Naive thymus-derived CD4-positive, alpha-beta T cell (primary cell): ENCODE measurements at regions of chr2 and their contacts with region 1.

Region 1: GRCh38 chr2:169479257-169480078 is at the start of gene BBS5:
- DNase-seq: peak; percentile 55 to 78 (median 74)
- ATAC-seq: peak; percentile 93
- H3K4me3 ChIP-seq: peak within 1 kb of the TSS; percentile 87
- H3K4me3 Mint-ChIP-seq: peak within 1 kb of the TSS; percentile 89 to 96 (median 92)
- H3K27ac ChIP-seq: peak within 1 kb of the TSS; percentile 49
- H3K27ac Mint-ChIP-seq: peak within 1 kb of the TSS; percentile 37 to 86 (median 69)
- H3K4me1 ChIP-seq: peaks cover 0 to 3% of the 10 kb centered on the region in 2 donors
- H3K4me1 Mint-ChIP-seq: peaks cover 12 to 30% (median 22%) of the 10 kb centered on the region in 7 donors
- H3K27me3 ChIP-seq: no peaks in the 10 kb centered on the region
- H3K27me3 Mint-ChIP-seq: no peaks in the 10 kb centered on the region
- total RNA-seq, gene BBS5: 2.0 to 3.8 (median 2.6) TPM

Region 2: DNA sequence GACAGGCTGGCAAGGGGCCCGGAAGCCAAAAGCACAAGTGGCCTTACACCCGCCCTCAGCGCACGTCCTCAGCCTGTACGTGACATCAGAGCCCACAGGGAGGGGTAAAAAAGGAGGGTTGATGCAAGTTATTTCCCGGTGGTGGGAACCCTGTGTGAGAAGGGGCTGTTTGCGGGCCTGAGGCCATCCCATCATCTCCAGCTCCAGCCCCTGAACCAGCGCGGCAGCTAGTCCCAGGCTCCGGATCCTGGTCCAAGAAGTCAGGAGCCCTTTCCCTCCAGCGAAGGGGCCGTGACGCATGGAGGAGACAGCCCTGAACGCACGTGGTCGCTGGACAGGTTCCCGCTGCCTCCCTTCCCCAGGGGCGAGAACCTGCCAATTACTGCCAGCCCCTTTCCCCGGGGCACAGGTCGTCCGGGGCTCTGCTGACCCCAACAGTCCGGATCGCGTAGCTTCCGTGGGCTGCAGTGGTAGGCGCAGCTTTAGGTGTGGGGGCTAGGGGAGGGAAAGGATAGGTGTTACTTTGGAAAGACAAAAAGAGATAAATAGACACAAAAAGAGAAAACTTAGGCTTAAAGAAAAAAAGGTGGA is 115.8 kb before region 1 on chr2:
- CTCF ChIA-PET with region 1: no interaction called
- POLR2A ChIA-PET with region 1: no interaction called
- intact Hi-C with region 1: loop called in 1 of 2 experiments (anchors 5 kb)
- DNase-seq: peak in 8 of 9 donors; percentile 14 to 49 (median 38)
- ATAC-seq: peak; percentile 58
- H3K4me3 ChIP-seq: peak overlapping the region; percentile 89
- H3K4me3 Mint-ChIP-seq: peak overlapping the region; percentile 87 to 98 (median 94)
- H3K27ac ChIP-seq: no peak overlapping the region
- H3K27ac Mint-ChIP-seq: peak overlapping the region in 4 of 9 donors; percentile 14 to 88 (median 55)
- H3K4me1 ChIP-seq: peaks cover 11 to 18% of the 10 kb centered on the region in 2 donors
- H3K4me1 Mint-ChIP-seq: peaks cover 17 to 37% (median 29%) of the 10 kb centered on the region in 7 donors
- H3K27me3 ChIP-seq: peaks cover 4 to 15% of the 10 kb centered on the region in 2 donors
- H3K27me3 Mint-ChIP-seq: peaks cover 42 to 60% (median 49%) of the 10 kb centered on the region in 5 donors

Region 3: DNA sequence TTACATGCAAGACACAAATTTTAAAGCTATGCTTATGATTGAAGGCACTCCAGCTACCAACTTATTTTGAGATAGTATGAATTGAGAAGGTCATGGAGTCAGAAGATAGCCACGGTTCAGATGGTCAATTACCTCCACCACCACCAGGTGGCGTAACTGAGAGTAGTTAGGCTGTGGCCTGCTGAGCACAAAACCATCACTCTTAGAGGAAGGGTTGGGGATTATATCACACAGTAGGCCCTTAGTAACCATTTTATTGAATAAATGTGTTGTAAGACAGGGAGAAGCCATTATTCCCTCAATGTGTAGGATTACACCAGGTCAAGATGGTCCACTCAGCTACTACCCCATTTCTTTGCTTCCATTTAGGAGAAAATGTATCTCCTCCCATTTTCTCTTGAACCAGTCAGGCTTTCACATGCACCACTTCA is 48.8 kb after region 1 on chr2:
- CTCF ChIA-PET with region 1: interaction called, 3 read pairs
- POLR2A ChIA-PET with region 1: no interaction called
- intact Hi-C with region 1: loop called in 1 of 2 experiments (anchors 5 kb)
- DNase-seq: peak; percentile 31 to 71 (median 54)
- ATAC-seq: peak; percentile 92
- H3K4me3 ChIP-seq: no peak overlapping the region
- H3K4me3 Mint-ChIP-seq: no peak overlapping the region
- H3K27ac ChIP-seq: no peak overlapping the region
- H3K27ac Mint-ChIP-seq: peak overlapping the region in 4 of 9 donors; percentile 0 to 68 (median 20)
- H3K4me1 ChIP-seq: no peaks in the 10 kb centered on the region
- H3K4me1 Mint-ChIP-seq: peaks cover 0 to 8% (median 0%) of the 10 kb centered on the region in 7 donors
- H3K27me3 ChIP-seq: no peaks in the 10 kb centered on the region
- H3K27me3 Mint-ChIP-seq: no peaks in the 10 kb centered on the region

Region 4: DNA sequence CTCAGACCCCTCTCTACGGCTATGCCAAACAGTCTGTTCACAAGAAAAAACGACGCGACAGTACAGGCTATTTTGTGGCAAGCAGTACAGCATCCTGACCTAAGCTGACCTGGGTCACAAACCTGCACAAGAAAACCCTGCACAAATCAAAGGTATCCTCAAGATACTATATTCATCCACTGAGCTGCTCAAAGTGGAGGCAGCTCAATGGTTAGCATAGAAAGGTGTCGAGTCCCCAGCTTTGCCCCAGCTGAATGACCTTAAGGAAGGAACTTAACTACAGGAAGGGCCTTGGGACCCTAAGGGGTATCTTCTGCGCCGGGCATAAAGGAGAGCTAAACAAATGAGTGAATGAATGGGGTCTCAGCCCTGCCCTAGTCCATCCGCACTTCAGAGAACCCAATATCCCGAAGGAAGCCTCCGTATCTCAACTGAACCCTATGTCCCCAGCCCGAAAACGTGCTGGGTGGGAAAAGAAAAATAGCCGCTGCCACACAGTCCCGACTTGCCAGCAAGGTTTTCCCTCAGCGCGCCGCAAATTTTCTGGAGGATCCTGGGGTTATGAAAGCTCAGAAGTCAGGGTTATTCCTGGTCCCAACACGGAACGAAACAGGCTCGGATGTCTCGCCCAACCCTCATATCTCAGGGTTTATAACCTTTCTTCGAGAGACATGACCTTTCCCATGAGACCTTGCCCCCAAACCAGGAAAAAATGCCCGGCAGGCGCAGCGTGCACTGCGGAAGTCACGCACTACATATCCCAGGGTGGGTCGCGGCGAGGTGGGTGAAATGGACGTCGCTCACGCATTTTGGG is 93.9 kb after region 1 on chr2 and contains the start of gene FASTKD1:
- CTCF ChIA-PET with region 1: no interaction called
- POLR2A ChIA-PET with region 1: interaction called, 3 read pairs
- intact Hi-C with region 1: loop called (anchors 1 kb)
- DNase-seq: peak; percentile 55 to 88 (median 76)
- ATAC-seq: peak; percentile 100
- H3K4me3 ChIP-seq: peak within 1 kb of the TSS; percentile 93
- H3K4me3 Mint-ChIP-seq: peak within 1 kb of the TSS; percentile 88 to 99 (median 94)
- H3K27ac ChIP-seq: peak within 1 kb of the TSS; percentile 80
- H3K27ac Mint-ChIP-seq: peak within 1 kb of the TSS; percentile 74 to 95 (median 91)
- H3K4me1 ChIP-seq: peaks cover 4 to 5% of the 10 kb centered on the region in 2 donors
- H3K4me1 Mint-ChIP-seq: peaks cover 14 to 32% (median 24%) of the 10 kb centered on the region in 7 donors
- H3K27me3 ChIP-seq: no peaks in the 10 kb centered on the region
- H3K27me3 Mint-ChIP-seq: peaks cover 0 to 4% (median 0%) of the 10 kb centered on the region in 5 donors
- total RNA-seq, gene FASTKD1: 13.5 to 43.5 (median 31.0) TPM

Region 5: DNA sequence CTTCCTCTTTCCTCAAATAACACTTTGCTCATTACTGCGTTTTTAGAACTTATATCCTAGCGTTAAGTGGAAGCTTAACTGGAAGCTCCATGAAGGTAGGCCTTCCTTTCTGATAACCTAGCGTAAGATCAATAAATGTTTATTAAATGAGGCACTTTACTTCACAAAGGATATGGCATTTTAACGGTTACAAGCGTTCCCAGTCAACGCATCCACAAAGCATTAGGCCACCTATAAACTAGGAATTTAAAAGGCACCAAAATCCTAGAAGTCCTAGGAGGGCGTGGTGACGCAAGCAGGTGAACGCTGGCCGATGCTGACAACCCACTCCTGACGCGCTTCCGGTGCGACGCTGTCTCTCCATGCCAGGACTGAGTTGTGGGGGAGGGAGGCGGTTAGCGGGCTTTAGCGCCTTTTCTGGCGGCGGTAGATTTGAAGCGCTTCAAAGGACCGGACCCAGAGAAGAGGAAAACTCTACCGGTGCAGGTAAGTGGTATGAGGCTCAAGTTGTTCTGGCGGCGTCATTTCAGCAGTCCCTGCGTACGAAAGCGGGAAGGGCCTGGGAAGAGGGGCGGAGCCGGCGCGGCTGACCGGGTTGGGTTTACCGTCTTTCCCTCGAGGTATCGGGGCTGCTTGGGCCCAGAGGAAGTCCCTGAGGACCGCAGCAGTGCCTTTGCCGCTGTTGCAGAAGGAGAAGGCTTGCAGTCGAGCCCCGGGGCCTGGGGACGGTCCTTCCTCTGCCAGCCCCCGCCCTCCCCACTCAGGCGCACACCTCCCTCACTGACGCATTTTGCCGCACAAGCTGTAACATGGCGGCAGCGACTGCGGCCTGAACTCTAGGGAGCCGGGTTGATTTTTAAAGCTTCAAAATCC is 104.8 kb after region 1 on chr2 and contains the start of gene PPIG:
- CTCF ChIA-PET with region 1: no interaction called
- POLR2A ChIA-PET with region 1: no interaction called
- intact Hi-C with region 1: loop called in 1 of 2 experiments (anchors 1 kb)
- DNase-seq: peak; percentile 71 to 90 (median 85)
- ATAC-seq: peak; percentile 94
- H3K4me3 ChIP-seq: peak within 1 kb of the TSS; percentile 89
- H3K4me3 Mint-ChIP-seq: peak within 1 kb of the TSS; percentile 90 to 100 (median 99)
- H3K27ac ChIP-seq: peak within 1 kb of the TSS; percentile 99
- H3K27ac Mint-ChIP-seq: peak within 1 kb of the TSS; percentile 97 to 100 (median 100)
- H3K4me1 ChIP-seq: peaks cover 17 to 29% of the 10 kb centered on the region in 2 donors
- H3K4me1 Mint-ChIP-seq: peaks cover 12 to 46% (median 40%) of the 10 kb centered on the region in 7 donors
- H3K27me3 ChIP-seq: no peaks in the 10 kb centered on the region
- H3K27me3 Mint-ChIP-seq: peaks cover 0 to 4% (median 0%) of the 10 kb centered on the region in 5 donors
- total RNA-seq, gene PPIG: 50.6 to 86.1 (median 73.7) TPM

Region 6: DNA sequence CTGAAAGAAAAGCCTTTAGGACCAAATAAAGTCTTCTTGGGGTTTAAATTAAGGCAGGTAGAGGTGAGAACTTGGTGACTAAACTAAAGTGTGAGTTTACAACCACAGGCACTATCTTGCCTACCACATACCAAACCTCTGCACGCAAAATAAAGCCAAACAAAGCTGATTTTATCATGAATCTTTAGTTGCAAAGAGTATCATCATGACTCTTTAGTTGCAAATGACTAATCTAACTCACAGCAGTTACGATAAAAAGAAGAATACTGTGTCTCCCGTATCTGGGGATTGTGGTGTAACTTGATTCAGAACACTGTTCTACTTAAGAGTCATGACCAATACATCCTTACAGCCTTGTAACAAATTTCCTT is 203.6 kb after region 1 on chr2:
- CTCF ChIA-PET with region 1: no interaction called
- POLR2A ChIA-PET with region 1: no interaction called
- intact Hi-C with region 1: loop called in 1 of 2 experiments (anchors 5 kb)
- DNase-seq: no peak
- ATAC-seq: peak; percentile 45
- H3K4me3 ChIP-seq: no peak overlapping the region
- H3K4me3 Mint-ChIP-seq: no peak overlapping the region
- H3K27ac ChIP-seq: no peak overlapping the region
- H3K27ac Mint-ChIP-seq: no peak overlapping the region
- H3K4me1 ChIP-seq: peaks cover 0 to 17% of the 10 kb centered on the region in 2 donors
- H3K4me1 Mint-ChIP-seq: peaks cover 0 to 6% (median 0%) of the 10 kb centered on the region in 7 donors
- H3K27me3 ChIP-seq: no peaks in the 10 kb centered on the region
- H3K27me3 Mint-ChIP-seq: peaks cover 0 to 7% (median 3%) of the 10 kb centered on the region in 5 donors

Region 7: DNA sequence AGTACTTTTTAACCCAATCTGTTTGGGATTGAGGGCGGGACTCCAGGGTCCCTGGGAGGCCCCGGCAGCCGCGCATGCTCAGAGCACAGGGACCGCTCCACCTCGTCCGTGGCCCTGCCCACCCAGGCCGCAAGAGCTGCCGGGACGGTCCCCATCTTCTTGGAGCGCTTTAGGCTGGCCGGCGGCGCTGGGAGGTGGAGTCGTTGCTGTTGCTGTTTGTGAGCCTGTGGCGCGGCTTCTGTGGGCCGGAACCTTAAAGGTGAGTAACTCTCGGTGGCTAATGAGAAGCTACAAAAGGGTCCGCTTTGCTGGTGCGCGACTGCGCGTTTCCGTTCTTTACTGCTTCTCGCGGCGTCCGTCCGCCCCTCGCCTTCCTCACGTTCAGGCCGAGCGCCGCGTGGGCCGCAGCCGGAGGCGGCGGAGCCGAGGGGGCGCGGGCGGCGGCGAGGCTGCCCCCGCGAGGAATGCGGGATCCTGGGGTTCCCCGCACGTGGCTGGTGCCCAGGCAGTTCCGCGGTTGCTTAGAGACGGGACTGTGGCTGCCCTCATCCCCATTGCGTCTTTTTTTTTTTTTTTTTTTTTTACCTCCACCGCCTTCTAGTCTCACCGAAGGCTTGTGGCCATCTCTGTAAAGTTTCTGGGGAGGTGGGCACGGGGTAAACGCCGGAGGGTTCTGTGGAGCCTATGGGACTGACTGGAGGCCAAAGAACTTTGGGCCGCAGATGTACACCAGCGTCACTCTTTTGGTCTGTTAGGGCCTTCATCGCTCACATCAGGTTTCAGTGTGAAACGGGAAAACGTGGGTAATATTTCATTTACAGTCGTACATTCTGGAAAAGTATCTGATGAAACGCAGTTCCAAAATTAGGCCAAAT is 319.5 kb after region 1 on chr2 and contains the start of gene SSB:
- CTCF ChIA-PET with region 1: interaction called, 4 read pairs
- POLR2A ChIA-PET with region 1: no interaction called
- intact Hi-C with region 1: loop called in 1 of 2 experiments (anchors 1 kb)
- DNase-seq: peak; percentile 75 to 93 (median 83)
- ATAC-seq: peak; percentile 95
- H3K4me3 ChIP-seq: peak within 1 kb of the TSS; percentile 84
- H3K4me3 Mint-ChIP-seq: peak within 1 kb of the TSS; percentile 80 to 94 (median 90)
- H3K27ac ChIP-seq: peak within 1 kb of the TSS; percentile 95
- H3K27ac Mint-ChIP-seq: peak within 1 kb of the TSS; percentile 87 to 97 (median 94)
- H3K4me1 ChIP-seq: peaks cover 11 to 21% of the 10 kb centered on the region in 2 donors
- H3K4me1 Mint-ChIP-seq: peaks cover 10 to 50% (median 37%) of the 10 kb centered on the region in 7 donors
- H3K27me3 ChIP-seq: no peaks in the 10 kb centered on the region
- H3K27me3 Mint-ChIP-seq: peaks cover 0 to 9% (median 0%) of the 10 kb centered on the region in 5 donors
- total RNA-seq, gene SSB: 88.3 to 104 (median 102) TPM